Endothelial cell of umbilical vein (primary cell): ENCODE measurements at regions of chr15 and their contacts with region 1.

Region 1: GRCh38 chr15:72722071-72722696 is 36.2 kb downstream of the BBS4 start:
- DNase-seq: peak; percentile 66
- H3K4me3 ChIP-seq: no peak overlapping the region
- H3K27ac ChIP-seq: no peak overlapping the region
- H3K4me1 ChIP-seq: no peaks in the 10 kb centered on the region
- H3K27me3 ChIP-seq: no peaks in the 10 kb centered on the region
- CTCF ChIP-seq: peak; percentile 74 to 77
- POLR2A ChIP-seq: no peak

Region 2: DNA sequence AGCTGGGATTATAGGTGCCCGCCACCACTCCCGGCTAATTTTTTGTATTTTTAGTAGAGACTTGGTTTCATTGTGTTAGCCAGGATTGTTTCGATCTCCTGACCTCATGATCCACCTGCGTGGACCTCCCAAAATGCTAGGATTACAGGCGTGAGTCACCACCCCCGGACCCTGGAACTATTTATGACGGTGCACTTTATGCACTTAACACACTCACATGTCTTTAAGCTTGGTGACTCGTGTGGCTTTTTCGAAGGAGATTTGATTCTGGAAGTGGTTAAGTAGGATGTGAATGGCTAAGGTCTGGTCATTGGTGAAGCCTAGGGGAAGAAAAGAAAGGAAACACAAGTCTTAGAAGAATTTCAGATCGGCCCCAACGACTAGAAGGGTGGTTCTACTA is 15.9 kb before region 1 on chr15:
- CTCF ChIA-PET with region 1: interaction called, 19 read pairs
- POLR2A ChIA-PET with region 1: no interaction called
- dilution Hi-C with region 1: no loop called
- intact Hi-C with region 1: no loop called
- DNase-seq: no peak
- H3K4me3 ChIP-seq: no peak overlapping the region
- H3K27ac ChIP-seq: no peak overlapping the region
- H3K4me1 ChIP-seq: no peaks in the 10 kb centered on the region
- H3K27me3 ChIP-seq: no peaks in the 10 kb centered on the region
- CTCF ChIP-seq: no peak
- POLR2A ChIP-seq: no peak

Region 3: DNA sequence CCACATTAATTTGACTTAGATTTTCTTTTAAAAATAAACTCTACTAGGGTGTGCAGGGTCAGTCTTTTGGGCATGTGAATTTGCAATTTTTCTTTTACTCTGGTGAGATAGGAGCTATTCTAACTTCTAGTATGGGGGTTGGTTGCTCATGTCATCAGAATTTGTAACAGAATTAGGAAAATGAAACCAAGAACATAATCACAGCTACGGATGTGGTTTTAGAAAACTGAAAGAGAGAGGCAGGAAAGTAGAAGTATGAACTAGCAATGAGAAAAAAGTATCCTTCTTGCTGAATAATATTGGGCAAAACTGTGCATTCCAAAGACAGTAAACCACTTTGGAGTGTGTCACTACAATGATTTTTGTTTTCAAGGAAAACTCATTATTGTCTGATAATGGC is 18.0 kb after region 1 on chr15:
- CTCF ChIA-PET with region 1: interaction called, 34 read pairs
- POLR2A ChIA-PET with region 1: interaction called, 3 read pairs
- dilution Hi-C with region 1: no loop called
- intact Hi-C with region 1: no loop called
- DNase-seq: no peak
- H3K4me3 ChIP-seq: no peak overlapping the region
- H3K27ac ChIP-seq: no peak overlapping the region
- H3K4me1 ChIP-seq: no peaks in the 10 kb centered on the region
- H3K27me3 ChIP-seq: no peaks in the 10 kb centered on the region
- CTCF ChIP-seq: no peak
- POLR2A ChIP-seq: no peak

Region 4: GRCh38 chr15:72783563-72784237 is 61.5 kb after region 1 on chr15 and contains the start of gene ADPGK:
- CTCF ChIA-PET with region 1: interaction called, 20 read pairs
- POLR2A ChIA-PET with region 1: no interaction called
- dilution Hi-C with region 1: no loop called
- intact Hi-C with region 1: loop called (anchors 5 kb)
- DNase-seq: peak; percentile 94
- H3K4me3 ChIP-seq: peak within 1 kb of the TSS; percentile 49 to 91 (median 61)
- H3K27ac ChIP-seq: peak within 1 kb of the TSS; percentile 61
- H3K4me1 ChIP-seq: peaks cover 10% of the 10 kb centered on the region
- H3K27me3 ChIP-seq: peaks cover 14 to 18% of the 10 kb centered on the region in 2 experiments
- CTCF ChIP-seq: no peak
- POLR2A ChIP-seq: peak; percentile 92
- total RNA-seq, gene ADPGK: 51.0 and 51.7 TPM in 2 replicates

Region 5: DNA sequence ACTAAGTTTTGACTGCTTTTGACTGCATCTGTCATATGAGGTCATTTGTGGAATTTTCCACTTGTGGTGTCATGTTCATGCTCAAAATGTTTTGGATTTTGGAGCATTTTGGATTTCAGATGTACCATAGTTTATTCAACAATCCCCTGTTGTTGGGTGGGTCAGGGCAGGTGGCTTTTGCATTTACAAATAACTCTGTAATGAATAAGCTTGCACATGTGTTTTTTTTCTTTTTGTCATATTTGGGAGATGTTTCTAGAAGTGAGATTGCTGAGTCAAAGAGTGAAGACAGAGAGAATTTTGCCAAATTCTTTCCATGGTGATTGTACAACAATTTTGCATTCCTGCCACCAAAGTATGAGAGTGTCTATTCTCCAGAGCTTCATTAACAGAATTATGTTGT is 123.8 kb after region 1 on chr15:
- CTCF ChIA-PET with region 1: no interaction called
- POLR2A ChIA-PET with region 1: no interaction called
- dilution Hi-C with region 1: no loop called
- intact Hi-C with region 1: no loop called
- DNase-seq: no peak
- H3K4me3 ChIP-seq: no peak overlapping the region
- H3K27ac ChIP-seq: no peak overlapping the region
- H3K4me1 ChIP-seq: no peaks in the 10 kb centered on the region
- H3K27me3 ChIP-seq: peaks cover 0 to 2% of the 10 kb centered on the region in 2 experiments
- CTCF ChIP-seq: no peak
- POLR2A ChIP-seq: no peak

Region 6: DNA sequence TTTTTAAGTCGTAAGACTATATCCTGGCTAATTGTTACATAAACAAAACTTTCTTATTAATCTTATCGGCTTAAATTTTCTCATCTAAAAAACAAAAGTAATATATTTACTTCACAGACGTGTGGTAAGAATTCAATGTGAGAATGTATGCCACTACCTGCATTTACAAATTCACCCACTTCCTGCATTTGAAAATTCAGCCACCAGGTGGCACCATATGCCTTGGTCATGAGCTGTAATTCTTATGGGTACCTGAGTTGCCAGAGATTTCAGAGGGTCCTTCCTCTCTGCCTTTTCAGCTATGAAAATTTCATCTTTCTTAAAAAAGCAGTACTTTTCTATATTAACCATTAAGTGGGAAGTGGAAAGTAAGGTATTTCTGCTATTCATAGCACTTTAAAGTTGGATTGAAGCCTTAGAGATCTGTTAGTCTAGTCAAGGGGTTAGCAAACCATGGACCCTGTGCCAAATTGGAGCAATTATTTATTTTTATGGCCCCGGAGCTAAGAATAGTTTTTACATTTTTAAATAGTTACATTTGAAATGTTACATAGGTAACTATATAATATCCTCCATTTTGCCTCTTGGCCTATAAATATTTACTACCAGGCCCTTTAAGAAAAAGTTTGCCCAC is 518.8 kb after region 1 on chr15:
- CTCF ChIA-PET with region 1: interaction called, 19 read pairs
- POLR2A ChIA-PET with region 1: no interaction called
- dilution Hi-C with region 1: no loop called
- intact Hi-C with region 1: no loop called
- DNase-seq: peak; percentile 66
- H3K4me3 ChIP-seq: no peak overlapping the region
- H3K27ac ChIP-seq: no peak overlapping the region
- H3K4me1 ChIP-seq: no peaks in the 10 kb centered on the region
- H3K27me3 ChIP-seq: peaks cover 0 to 4% of the 10 kb centered on the region in 2 experiments
- CTCF ChIP-seq: peak; percentile 64 to 67
- POLR2A ChIP-seq: no peak

Region 7: GRCh38 chr15:73273181-73274002 is 551.2 kb after region 1 on chr15:
- CTCF ChIA-PET with region 1: interaction called, 26 read pairs
- POLR2A ChIA-PET with region 1: no interaction called
- dilution Hi-C with region 1: no loop called
- intact Hi-C with region 1: loop called (anchors 2 kb)
- DNase-seq: peak; percentile 58
- H3K4me3 ChIP-seq: no peak overlapping the region
- H3K27ac ChIP-seq: no peak overlapping the region
- H3K4me1 ChIP-seq: no peaks in the 10 kb centered on the region
- H3K27me3 ChIP-seq: peaks cover 2 to 12% of the 10 kb centered on the region in 2 experiments
- CTCF ChIP-seq: peak; percentile 63 to 65
- POLR2A ChIP-seq: no peak